Activated CD4-positive, alpha-beta T cell treated with anti-CD3 and anti-CD28 coated beads for 36 hours (primary cell): ENCODE measurements at regions of chr11 and their contacts with region 1.

Region 1: DNA sequence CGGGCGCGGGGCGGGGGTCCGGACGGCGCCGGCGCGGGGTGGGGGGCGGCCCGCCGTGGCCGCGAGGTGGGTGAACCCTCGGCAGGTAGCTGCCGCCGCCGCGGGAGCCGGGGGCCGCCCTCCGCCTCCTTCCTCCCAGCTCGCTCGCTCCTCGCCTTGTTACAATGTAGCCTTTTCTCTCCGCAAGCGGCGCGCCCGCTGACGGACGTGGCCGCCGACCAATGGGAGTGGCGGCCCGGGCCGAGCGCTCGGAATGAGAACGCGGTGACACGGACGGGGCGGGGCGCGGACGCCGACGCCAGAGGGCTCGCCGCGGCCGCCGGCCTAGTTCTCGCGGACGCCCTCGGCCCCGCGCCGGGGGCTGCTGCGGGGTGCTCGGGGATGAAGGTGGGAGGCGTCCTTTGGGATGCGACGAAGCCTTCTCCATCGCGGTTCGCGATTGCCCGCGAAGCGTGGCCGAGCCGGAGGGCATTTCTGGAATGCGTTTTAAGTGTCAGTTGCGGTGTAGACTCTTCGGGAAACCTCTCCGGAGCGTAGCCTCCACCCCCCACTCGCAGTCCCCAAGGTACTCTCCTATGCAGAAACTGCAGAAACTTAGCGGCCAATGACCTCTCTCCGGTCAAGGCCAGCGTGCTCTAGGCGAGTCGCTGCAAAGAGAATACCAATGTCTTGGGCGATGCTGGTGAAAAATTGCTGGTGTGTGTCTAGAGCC is 734 bp downstream of the PRDM11 start:
- DNase-seq: peak; percentile 95
- ATAC-seq: peak; percentile 99
- H3K4me3 Mint-ChIP-seq: peak overlapping the region; percentile 81
- H3K27ac Mint-ChIP-seq: peak overlapping the region; percentile 74
- H3K4me1 Mint-ChIP-seq: peaks cover 19% of the 10 kb centered on the region
- H3K27me3 Mint-ChIP-seq: peaks cover 15% of the 10 kb centered on the region

Region 2: DNA sequence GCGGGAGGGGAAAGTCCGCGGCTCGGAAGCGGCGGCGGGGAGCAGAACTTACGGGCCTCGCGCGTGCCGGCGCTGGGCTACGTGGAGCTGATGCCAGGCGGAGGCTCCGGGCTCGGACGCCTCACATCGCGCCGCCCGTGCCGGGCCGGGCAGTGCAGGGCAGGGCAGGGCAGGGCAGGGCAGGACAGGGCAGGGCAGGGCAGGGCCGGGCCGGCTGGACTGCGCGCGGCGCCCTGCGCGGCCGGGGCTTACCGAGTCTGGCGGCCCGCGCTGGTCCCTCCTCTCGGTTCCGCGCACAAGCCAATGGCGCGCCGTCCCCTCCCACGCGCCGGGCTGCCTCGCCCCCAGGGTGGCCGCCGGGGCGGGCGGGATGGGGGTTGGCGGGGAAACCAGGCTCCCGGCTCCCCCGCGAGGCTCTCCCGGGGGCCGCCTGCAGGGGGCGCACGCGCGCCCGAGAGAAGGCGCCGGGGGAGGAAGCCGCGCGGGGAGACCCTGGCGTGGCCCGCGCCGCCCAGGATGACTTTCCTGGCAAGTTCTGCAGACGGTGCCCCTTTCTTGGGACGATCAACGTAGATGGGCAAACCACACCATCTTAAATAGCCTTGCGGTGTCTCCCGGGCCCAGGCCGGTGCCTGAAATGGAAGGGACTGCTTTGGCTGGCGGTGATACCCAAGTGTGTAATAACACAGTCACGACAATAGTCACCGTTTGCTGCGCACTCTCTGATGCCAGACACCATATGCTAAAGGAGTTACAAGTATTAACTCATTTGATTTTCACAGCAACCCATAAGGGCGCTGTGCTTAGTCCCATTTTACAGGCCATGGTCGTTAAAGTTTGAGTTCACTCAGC is 196.3 kb before region 1 on chr11 and contains the start of gene TP53I11:
- CTCF ChIA-PET with region 1: no interaction called
- POLR2A ChIA-PET with region 1: no interaction called
- intact Hi-C with region 1: loop called in 1 of 2 experiments (anchors 2 kb)
- DNase-seq: peak; percentile 84
- ATAC-seq: peak; percentile 76
- H3K4me3 Mint-ChIP-seq: peak within 1 kb of the TSS; percentile 71
- H3K27ac Mint-ChIP-seq: no peak within 1 kb of the TSS
- H3K4me1 Mint-ChIP-seq: peaks cover 10% of the 10 kb centered on the region
- H3K27me3 Mint-ChIP-seq: no peaks in the 10 kb centered on the region
- total RNA-seq, gene TP53I11: 14.3 to 15.8 TPM

Region 3: DNA sequence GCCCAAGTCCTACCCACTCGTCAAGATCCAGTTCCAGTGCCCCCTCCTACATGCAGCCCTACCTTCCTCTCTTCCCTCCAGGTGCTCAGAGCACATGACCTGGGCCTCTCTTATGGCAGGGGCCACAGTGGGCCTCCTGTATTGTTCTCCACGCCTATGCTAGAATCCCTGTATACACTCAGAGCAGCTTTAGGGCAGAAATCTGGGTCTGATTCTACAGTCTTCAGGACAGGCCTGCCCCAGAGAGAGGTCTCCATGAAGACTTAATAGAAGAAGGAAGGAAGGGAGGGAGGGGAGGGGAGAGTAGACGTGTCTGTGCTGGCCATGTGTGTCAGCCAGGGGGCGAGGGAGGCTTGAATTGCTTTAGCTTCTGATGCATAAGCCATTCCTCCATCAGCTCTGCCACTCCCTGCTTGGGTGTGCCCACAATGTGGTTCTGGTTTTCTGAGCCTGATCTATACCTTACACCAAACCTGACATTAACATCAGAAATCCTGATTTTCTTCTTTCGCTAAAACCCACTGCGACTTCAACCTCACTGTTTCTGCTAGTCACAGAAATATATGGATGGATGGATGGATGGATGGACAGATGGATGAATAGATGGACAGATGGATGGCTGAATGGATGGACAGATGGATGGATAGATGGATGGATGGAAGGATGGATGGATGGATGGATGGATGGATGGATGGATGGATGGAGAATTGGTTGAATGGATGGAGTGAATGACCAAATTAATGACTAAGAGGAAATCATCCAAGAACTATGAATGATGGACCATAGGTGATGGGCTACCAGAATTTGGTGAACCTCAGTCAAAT is 57.3 kb before region 1 on chr11:
- CTCF ChIA-PET with region 1: no interaction called
- POLR2A ChIA-PET with region 1: no interaction called
- intact Hi-C with region 1: no loop called
- DNase-seq: peak; percentile 43
- ATAC-seq: peak; percentile 41
- H3K4me3 Mint-ChIP-seq: no peak overlapping the region
- H3K27ac Mint-ChIP-seq: no peak overlapping the region
- H3K4me1 Mint-ChIP-seq: peaks cover 16% of the 10 kb centered on the region
- H3K27me3 Mint-ChIP-seq: no peaks in the 10 kb centered on the region

Region 4: GRCh38 chr11:45133871-45134270 is 13.3 kb before region 1 on chr11:
- CTCF ChIA-PET with region 1: no interaction called
- POLR2A ChIA-PET with region 1: no interaction called
- intact Hi-C with region 1: no loop called
- DNase-seq: no peak
- ATAC-seq: no peak
- H3K4me3 Mint-ChIP-seq: no peak overlapping the region
- H3K27ac Mint-ChIP-seq: no peak overlapping the region
- H3K4me1 Mint-ChIP-seq: no peaks in the 10 kb centered on the region
- H3K27me3 Mint-ChIP-seq: peaks cover 30% of the 10 kb centered on the region

Region 5: GRCh38 chr11:45180179-45180842 is 33.1 kb after region 1 on chr11:
- CTCF ChIA-PET with region 1: no interaction called
- POLR2A ChIA-PET with region 1: no interaction called
- intact Hi-C with region 1: loop called in 1 of 2 experiments (anchors 1 kb)
- DNase-seq: peak; percentile 48
- ATAC-seq: peak; percentile 37
- H3K4me3 Mint-ChIP-seq: peak overlapping the region; percentile 60
- H3K27ac Mint-ChIP-seq: no peak overlapping the region
- H3K4me1 Mint-ChIP-seq: peaks cover 3% of the 10 kb centered on the region
- H3K27me3 Mint-ChIP-seq: peaks cover 22% of the 10 kb centered on the region

Region 6: DNA sequence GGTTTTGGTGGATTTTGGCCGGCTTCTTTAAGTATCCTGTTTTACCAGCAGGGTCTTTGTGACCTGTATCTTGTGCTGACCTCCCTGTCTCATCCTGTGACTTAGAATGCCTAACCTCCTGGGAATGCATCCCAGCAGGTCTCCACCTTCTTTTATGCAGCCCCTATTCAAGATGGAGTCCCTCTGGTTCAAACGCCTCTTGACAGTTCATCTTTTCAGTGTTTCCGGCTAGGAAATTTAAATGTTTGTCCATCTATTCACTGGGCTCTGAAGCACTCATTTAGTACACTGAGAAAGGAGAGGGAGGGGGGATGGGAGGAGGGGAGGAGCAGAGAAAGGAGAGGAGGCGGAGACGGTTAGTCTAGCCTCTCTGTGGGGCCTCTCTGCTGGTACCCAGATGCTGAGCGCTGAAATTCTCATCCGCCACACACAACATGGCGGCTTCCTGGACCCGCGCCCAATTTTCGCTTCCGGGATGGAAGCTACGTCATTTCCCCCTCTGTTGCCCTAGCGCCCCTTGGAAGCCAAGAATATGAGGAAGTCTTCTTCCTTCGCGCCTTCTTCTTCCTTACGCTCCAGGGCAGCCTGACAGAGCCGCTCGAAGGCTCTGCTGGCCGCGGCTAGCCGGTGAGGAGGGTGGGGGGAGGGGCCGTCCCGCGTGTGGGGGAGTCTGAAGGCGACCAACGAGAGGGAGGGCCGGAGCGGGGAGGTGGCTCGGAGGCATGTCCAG is 208.0 kb after region 1 on chr11:
- CTCF ChIA-PET with region 1: interaction called, 3 read pairs
- POLR2A ChIA-PET with region 1: no interaction called
- intact Hi-C with region 1: loop called (anchors 1 kb)
- DNase-seq: peak; percentile 93
- ATAC-seq: peak; percentile 97
- H3K4me3 Mint-ChIP-seq: peak overlapping the region; percentile 75
- H3K27ac Mint-ChIP-seq: peak overlapping the region; percentile 72
- H3K4me1 Mint-ChIP-seq: peaks cover 21% of the 10 kb centered on the region
- H3K27me3 Mint-ChIP-seq: peaks cover 2% of the 10 kb centered on the region

Region 7: DNA sequence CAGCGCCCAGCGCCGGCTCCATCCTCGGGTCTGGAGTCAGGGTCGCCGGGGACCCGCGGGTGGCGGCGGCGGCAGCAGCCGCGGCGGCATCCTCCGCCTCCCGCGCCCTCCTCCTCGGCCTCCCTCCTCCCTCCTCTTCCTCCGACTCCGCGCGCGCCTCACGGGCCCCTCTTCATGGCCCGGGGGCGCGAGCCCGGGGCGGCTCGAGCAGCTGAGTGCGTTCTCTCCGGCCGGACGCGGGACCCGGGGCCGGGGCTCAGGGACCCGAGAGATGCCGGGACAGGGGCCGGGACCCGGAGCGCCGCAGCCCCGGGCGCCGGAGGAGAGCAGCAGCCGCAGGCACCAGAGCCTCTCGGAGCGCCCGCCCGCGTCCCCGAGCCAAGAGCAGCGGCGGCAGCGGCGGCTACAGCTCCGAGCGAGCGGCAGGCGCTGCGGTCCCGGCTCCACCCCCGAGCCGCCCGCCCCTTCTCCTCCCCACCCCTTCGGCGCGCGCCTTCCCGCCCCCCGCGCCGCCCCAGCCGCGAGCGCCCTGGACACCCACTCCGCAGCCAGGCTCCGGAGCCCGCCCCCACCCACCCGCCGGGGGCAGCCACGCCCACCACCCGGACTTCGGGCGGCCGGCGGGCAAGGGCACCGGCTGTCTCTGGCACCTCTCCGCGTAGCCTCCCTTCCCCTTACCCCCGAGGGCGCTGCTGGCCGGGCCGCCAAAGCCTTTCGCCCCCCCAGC is 518.2 kb after region 1 on chr11 and contains the start of gene CHST1:
- CTCF ChIA-PET with region 1: no interaction called
- POLR2A ChIA-PET with region 1: no interaction called
- intact Hi-C with region 1: loop called in 1 of 2 experiments (anchors 10 kb)
- DNase-seq: peak; percentile 56
- ATAC-seq: peak; percentile 43
- H3K4me3 Mint-ChIP-seq: peak within 1 kb of the TSS; percentile 47
- H3K27ac Mint-ChIP-seq: no peak within 1 kb of the TSS
- H3K4me1 Mint-ChIP-seq: peaks cover 5% of the 10 kb centered on the region
- H3K27me3 Mint-ChIP-seq: peaks cover 48% of the 10 kb centered on the region
- total RNA-seq, gene CHST1: 0.11 to 0.12 TPM

Region 8: DNA sequence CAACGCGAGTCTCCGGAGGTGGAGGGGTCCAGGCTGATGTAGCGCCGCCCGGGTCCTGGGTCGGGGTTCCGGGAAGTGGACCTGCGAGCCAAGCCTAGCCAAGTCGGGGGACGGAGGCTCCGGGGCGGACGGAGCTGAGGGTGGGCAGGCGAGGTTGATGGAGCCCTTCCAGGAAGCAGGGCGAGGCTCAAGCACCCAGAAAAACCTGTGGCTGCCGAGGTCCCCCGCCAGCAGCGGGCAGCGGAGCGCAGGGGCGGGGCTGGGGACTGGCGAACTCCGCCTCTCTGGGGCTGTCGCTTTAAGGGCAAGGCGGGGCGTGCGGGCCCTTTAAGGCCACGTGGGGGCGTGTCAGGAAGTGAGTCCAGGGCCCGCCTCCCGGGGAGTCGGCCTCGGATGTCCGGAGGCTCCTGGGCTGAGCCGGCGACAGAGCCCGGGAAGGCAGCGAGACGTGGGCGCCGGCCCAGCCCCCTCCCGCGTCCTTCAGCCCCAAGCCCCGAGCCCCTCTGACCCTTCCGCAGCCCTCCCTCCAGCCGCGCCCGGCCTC is 657.7 kb after region 1 on chr11 and contains the start of gene SLC35C1:
- CTCF ChIA-PET with region 1: no interaction called
- POLR2A ChIA-PET with region 1: no interaction called
- intact Hi-C with region 1: loop called in 1 of 2 experiments (anchors 1 kb)
- DNase-seq: peak; percentile 98
- ATAC-seq: peak; percentile 97
- H3K4me3 Mint-ChIP-seq: peak within 1 kb of the TSS; percentile 91
- H3K27ac Mint-ChIP-seq: peak within 1 kb of the TSS; percentile 86
- H3K4me1 Mint-ChIP-seq: peaks cover 42% of the 10 kb centered on the region
- H3K27me3 Mint-ChIP-seq: no peaks in the 10 kb centered on the region
- total RNA-seq, gene SLC35C1: 9.6 to 9.8 TPM